Activated CD4-positive, alpha-beta memory T cell treated with anti-CD3 and anti-CD28 coated beads, Interleukin-2, amount 10 ng/mL, durations not matched to agents 7 days and 5 days (primary cell): ENCODE measurements at regions of chr17 and their contacts with region 1.

Region 1: GRCh38 chr17:2336215-2336851 is at the start of gene TSR1:
- DNase-seq: peak; percentile 91
- H3K4me3 Mint-ChIP-seq: peak within 1 kb of the TSS; percentile 99
- H3K27ac Mint-ChIP-seq: peak within 1 kb of the TSS; percentile 88
- H3K4me1 Mint-ChIP-seq: peaks cover 8% of the 10 kb centered on the region
- H3K27me3 Mint-ChIP-seq: no peaks in the 10 kb centered on the region
- total RNA-seq, gene TSR1: 22.5 to 23.5 TPM

Region 2: GRCh38 chr17:2259769-2260536 is 76.4 kb before region 1 on chr17:
- CTCF ChIA-PET with region 1: no interaction called
- POLR2A ChIA-PET with region 1: interaction called, 13 read pairs
- DNase-seq: peak; percentile 85
- H3K4me3 Mint-ChIP-seq: peak overlapping the region; percentile 67
- H3K27ac Mint-ChIP-seq: peak overlapping the region; percentile 94
- H3K4me1 Mint-ChIP-seq: peaks cover 80% of the 10 kb centered on the region
- H3K27me3 Mint-ChIP-seq: no peaks in the 10 kb centered on the region

Region 3: GRCh38 chr17:2266045-2266864 is 70.1 kb before region 1 on chr17:
- CTCF ChIA-PET with region 1: no interaction called
- POLR2A ChIA-PET with region 1: interaction called, 13 read pairs
- DNase-seq: peak; percentile 94
- H3K4me3 Mint-ChIP-seq: peak overlapping the region; percentile 79
- H3K27ac Mint-ChIP-seq: peak overlapping the region; percentile 100
- H3K4me1 Mint-ChIP-seq: peaks cover 80% of the 10 kb centered on the region
- H3K27me3 Mint-ChIP-seq: no peaks in the 10 kb centered on the region

Region 4: GRCh38 chr17:2303204-2304188 is 32.8 kb before region 1 on chr17 and contains the starts of genes SMG6 and SRR:
- CTCF ChIA-PET with region 1: interaction called, 7 read pairs
- POLR2A ChIA-PET with region 1: interaction called, 29 read pairs
- DNase-seq: peak; percentile 96
- H3K4me3 Mint-ChIP-seq: peak within 1 kb of the TSS; percentile 92
- H3K27ac Mint-ChIP-seq: peak within 1 kb of the TSS; percentile 73
- H3K4me1 Mint-ChIP-seq: peaks cover 49% of the 10 kb centered on the region
- H3K27me3 Mint-ChIP-seq: no peaks in the 10 kb centered on the region
- total RNA-seq, gene SMG6: 37.8 to 38.7 TPM
- total RNA-seq, gene SRR: 19.3 to 19.5 TPM

Region 5: DNA sequence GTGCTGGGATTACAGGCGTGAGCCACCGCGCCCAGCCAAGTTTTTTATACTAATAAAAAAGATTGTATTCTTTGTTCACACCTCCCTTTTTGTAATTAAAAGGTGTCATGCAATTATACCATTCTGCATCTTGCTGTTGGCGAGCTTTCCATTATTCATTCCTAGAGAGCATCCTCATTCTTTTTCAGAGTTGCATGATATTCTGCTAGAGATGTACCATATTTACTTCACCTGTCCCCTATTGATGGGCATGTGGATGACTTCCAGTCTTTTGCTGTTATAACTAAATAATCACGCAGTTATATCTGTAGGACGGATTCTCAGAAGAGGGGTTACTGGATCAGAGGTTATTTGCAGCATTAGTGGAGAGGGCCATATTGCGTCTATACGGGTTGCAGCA is 18.0 kb after region 1 on chr17:
- CTCF ChIA-PET with region 1: interaction called, 32 read pairs
- POLR2A ChIA-PET with region 1: interaction called, 16 read pairs
- DNase-seq: no peak
- H3K4me3 Mint-ChIP-seq: no peak overlapping the region
- H3K27ac Mint-ChIP-seq: peak overlapping the region; percentile 79
- H3K4me1 Mint-ChIP-seq: peaks cover 17% of the 10 kb centered on the region
- H3K27me3 Mint-ChIP-seq: no peaks in the 10 kb centered on the region

Region 6: DNA sequence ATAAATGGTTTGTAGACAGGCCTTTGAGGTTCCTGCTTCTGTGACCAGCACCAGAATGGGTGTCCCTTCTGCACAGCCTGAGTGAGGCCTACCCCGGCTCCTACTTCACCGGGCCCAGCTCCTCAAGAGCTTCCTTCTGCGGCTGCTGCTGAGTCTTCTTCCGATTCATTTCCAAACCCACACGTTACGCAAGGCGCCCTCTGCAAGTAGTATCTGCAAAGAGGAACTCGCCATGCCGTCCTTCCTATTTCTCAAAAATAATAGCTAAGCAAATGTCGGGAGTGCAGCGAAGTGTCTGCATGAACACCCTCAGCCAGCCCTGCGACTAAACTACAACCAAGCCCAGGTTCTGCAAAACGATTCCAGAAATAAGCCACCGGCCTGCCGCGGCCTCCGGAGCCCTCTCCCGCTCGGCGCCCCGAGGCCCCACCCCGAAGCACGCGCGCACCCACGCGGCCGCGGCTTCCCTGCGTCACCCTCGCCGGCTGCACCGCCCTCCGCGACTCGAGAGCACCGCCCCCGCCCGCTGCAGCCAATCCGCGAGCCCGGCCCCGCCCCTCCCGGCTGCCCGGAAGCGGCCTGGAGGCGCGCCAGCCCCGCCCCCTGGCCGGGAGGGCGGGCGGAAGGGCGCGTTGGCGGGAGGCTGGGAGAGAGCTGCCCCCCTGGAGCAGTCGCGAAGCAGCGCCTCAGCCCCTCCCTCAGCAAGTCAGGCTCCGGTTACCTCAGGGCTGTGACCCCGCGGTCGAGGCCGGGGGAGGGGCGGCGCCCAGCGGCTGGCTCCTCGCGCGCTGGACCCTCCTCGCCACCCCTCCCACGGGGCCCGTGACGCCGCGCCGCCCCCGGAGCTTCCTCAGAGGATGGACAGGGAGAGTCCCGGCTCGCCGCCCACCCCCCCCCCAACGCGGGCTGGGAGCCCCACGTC is 56.2 kb after region 1 on chr17:
- CTCF ChIA-PET with region 1: interaction called, 3 read pairs
- POLR2A ChIA-PET with region 1: interaction called, 38 read pairs
- DNase-seq: peak; percentile 97
- H3K4me3 Mint-ChIP-seq: peak overlapping the region; percentile 90
- H3K27ac Mint-ChIP-seq: peak overlapping the region; percentile 90
- H3K4me1 Mint-ChIP-seq: peaks cover 67% of the 10 kb centered on the region
- H3K27me3 Mint-ChIP-seq: no peaks in the 10 kb centered on the region

Region 7: DNA sequence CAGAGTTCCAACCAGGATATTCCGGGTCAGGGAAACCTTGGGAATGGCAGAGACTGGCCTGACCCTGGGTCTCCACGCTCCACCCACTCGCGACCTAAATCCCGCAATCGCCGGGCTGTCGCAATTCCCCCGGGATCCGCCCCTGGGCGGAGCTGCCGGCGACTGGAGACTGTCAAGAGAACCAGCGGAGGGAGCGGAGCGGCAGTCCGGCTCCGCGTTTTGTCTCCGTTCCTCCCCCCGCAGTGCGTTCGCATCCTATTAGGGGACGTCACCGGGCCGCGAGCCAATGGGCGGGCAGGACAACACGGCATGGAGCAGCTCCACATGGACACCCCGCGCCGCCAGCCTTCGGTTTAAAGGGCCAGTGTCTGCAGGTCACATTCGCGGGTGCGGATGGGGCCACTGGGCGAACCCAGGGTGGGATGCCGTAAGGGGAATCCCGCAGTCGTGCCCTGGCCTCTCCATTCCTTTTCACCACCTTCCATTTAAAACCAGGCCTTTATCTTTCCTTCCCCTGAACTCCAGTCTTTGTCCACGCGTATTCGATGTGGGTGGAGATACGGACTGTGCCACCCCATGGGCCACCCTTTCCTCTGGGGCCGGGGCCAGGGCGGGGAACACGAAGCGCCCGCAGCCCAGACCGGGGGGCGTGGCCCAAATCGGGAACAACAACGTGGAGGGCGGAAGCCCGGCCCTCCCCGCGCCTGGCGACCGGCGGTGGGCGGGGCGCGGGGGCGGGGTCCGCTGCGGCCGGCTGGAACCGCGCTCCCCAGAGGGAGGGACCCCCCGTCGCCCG is 65.3 kb after region 1 on chr17:
- CTCF ChIA-PET with region 1: no interaction called
- POLR2A ChIA-PET with region 1: interaction called, 12 read pairs
- DNase-seq: peak; percentile 100
- H3K4me3 Mint-ChIP-seq: peak overlapping the region; percentile 97
- H3K27ac Mint-ChIP-seq: peak overlapping the region; percentile 99
- H3K4me1 Mint-ChIP-seq: peaks cover 55% of the 10 kb centered on the region
- H3K27me3 Mint-ChIP-seq: no peaks in the 10 kb centered on the region

Region 8: DNA sequence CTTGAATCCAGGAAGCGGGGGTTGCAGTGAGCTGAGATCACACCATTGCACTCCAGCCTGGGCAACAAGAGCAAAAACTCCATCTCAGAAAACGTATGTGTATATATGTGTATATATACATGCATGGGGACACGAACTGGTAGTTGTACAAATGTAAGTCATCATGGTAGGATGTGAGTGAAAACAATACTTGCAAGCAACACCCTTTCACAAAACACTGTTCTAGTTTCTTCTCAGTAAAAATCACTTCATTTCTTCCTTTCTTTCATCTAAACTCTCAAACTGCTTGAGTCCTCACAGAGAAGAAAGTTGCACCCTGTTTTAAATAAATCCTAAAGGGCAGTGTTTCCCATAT is 123.6 kb after region 1 on chr17:
- CTCF ChIA-PET with region 1: no interaction called
- POLR2A ChIA-PET with region 1: no interaction called
- DNase-seq: no peak
- H3K4me3 Mint-ChIP-seq: no peak overlapping the region
- H3K27ac Mint-ChIP-seq: peak overlapping the region; percentile 48
- H3K4me1 Mint-ChIP-seq: peaks cover 19% of the 10 kb centered on the region
- H3K27me3 Mint-ChIP-seq: no peaks in the 10 kb centered on the region